ENCODE measurements at regions of chr3 and their contacts with region 1.

Region 1: GRCh38 chr3:48918388-48919214 is at the start of gene ARIH2:
- DNase-seq: peak; percentile 94
- H3K4me3 Mint-ChIP-seq: peak within 1 kb of the TSS; percentile 98
- H3K27ac Mint-ChIP-seq: peak within 1 kb of the TSS; percentile 100
- H3K4me1 Mint-ChIP-seq: peaks cover 31% of the 10 kb centered on the region
- H3K27me3 Mint-ChIP-seq: no peaks in the 10 kb centered on the region
- total RNA-seq, gene ARIH2: 109 to 130 TPM

Region 2: GRCh38 chr3:48716982-48717746 is 201.4 kb before region 1 on chr3 and contains the start of gene IP6K2:
- CTCF ChIA-PET with region 1: interaction called, 3 read pairs
- POLR2A ChIA-PET with region 1: interaction called, 3 read pairs
- intact Hi-C with region 1: loop called (anchors 2 kb)
- DNase-seq: peak; percentile 100
- H3K4me3 Mint-ChIP-seq: peak within 1 kb of the TSS; percentile 96
- H3K27ac Mint-ChIP-seq: peak within 1 kb of the TSS; percentile 87
- H3K4me1 Mint-ChIP-seq: peaks cover 30% of the 10 kb centered on the region
- H3K27me3 Mint-ChIP-seq: no peaks in the 10 kb centered on the region
- total RNA-seq, gene IP6K2: 41.6 to 43.4 TPM

Region 3: DNA sequence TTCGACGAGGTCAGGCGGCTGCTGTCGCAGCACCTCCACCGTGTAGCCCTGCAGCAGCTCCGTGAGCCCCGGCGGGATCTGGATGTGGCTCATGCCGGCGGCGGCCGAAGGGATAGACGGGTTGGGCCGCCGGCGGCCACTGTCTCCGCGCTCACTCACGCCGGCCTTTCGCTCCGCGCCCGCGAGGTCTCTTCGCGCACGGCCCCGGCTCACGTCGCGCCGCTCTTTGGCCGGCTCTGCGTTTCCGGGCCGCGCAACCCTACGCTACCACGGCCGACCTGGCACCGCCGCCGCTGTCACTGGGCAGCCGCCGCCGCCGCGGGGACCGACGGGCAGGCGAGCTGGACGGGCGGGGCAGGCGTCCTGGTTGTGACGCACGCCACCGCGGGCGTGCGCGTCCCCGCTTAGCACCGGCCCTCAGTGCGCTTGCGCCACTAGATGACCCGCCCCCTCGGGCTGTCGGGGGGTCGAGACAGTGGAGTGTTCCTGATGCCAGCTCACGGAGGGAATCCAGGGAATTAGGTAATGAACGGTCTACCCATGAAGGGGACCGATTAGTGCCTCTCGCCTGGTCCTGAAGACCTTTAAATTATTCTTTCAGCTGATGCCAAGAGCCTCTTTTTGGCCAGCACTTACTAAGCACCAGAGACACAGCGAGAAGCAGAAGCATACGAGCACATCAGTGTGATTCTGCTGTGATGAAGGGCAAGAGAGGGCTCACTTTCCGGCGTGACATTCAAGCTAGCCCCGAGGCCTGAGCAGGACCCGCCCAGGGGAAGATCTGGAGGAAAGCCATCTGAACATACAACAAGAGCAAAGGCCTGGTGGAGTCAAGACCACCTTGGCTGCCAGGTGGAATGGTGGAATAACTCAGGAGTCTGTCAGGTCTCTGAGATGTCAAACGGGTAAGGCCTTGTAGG is 70.8 kb before region 1 on chr3 and contains the start of gene PRKAR2A:
- CTCF ChIA-PET with region 1: interaction called, 8 read pairs
- POLR2A ChIA-PET with region 1: interaction called, 6 read pairs
- intact Hi-C with region 1: loop called (anchors 1 kb)
- DNase-seq: peak; percentile 89
- H3K4me3 Mint-ChIP-seq: peak within 1 kb of the TSS; percentile 83
- H3K27ac Mint-ChIP-seq: peak within 1 kb of the TSS; percentile 89
- H3K4me1 Mint-ChIP-seq: peaks cover 28% of the 10 kb centered on the region
- H3K27me3 Mint-ChIP-seq: no peaks in the 10 kb centered on the region
- total RNA-seq, gene PRKAR2A: 30.4 to 32.7 TPM

Region 4: GRCh38 chr3:48898383-48899234 is 20.0 kb before region 1 on chr3 and contains the start of gene SLC25A20:
- CTCF ChIA-PET with region 1: interaction called, 15 read pairs
- POLR2A ChIA-PET with region 1: interaction called, 28 read pairs
- intact Hi-C with region 1: loop called (anchors 1 kb)
- DNase-seq: peak; percentile 96
- H3K4me3 Mint-ChIP-seq: peak within 1 kb of the TSS; percentile 97
- H3K27ac Mint-ChIP-seq: peak within 1 kb of the TSS; percentile 92
- H3K4me1 Mint-ChIP-seq: peaks cover 35% of the 10 kb centered on the region
- H3K27me3 Mint-ChIP-seq: no peaks in the 10 kb centered on the region
- total RNA-seq, gene SLC25A20: 16.7 to 18.2 TPM

Region 5: DNA sequence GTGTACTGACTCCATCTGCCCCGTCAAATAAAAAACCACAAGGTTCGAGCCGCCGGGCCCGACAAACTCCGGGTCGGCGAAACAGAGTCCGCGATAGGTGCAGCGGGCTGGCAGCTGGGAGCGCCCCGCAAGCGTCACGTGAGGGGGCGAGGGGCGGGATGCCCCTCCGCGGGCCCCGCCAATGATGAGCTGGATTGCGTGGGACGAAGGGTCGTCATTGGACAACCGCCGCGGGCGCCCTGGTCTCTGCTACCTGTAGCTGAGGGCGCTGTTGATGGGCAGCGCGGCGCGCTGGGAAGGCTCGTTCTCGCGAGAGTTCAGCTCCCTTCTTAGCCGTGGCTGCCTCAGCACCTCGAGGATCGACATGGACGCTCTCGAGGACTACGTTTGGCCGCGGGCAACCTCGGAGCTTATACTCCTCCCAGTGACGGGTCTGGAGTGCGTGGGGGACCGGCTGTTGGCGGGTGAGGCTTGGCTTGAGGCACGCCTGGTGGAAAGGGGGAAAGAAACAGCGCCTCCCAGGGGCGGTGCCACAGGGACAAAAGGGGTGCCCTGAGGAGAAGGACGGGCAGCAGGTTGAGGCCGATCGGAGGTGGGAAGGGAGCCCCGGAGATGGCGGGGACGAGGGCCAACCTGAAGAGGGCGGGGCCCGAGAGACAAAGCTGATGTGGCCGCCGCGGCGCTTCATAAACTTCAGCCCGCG is 88.6 kb after region 1 on chr3 and contains the start of gene WDR6:
- CTCF ChIA-PET with region 1: interaction called, 3 read pairs
- POLR2A ChIA-PET with region 1: interaction called, 13 read pairs
- intact Hi-C with region 1: loop called (anchors 5 kb)
- DNase-seq: peak; percentile 99
- H3K4me3 Mint-ChIP-seq: peak within 1 kb of the TSS; percentile 95
- H3K27ac Mint-ChIP-seq: peak within 1 kb of the TSS; percentile 98
- H3K4me1 Mint-ChIP-seq: peaks cover 21% of the 10 kb centered on the region
- H3K27me3 Mint-ChIP-seq: no peaks in the 10 kb centered on the region
- total RNA-seq, gene WDR6: 139 to 144 TPM

Region 6: DNA sequence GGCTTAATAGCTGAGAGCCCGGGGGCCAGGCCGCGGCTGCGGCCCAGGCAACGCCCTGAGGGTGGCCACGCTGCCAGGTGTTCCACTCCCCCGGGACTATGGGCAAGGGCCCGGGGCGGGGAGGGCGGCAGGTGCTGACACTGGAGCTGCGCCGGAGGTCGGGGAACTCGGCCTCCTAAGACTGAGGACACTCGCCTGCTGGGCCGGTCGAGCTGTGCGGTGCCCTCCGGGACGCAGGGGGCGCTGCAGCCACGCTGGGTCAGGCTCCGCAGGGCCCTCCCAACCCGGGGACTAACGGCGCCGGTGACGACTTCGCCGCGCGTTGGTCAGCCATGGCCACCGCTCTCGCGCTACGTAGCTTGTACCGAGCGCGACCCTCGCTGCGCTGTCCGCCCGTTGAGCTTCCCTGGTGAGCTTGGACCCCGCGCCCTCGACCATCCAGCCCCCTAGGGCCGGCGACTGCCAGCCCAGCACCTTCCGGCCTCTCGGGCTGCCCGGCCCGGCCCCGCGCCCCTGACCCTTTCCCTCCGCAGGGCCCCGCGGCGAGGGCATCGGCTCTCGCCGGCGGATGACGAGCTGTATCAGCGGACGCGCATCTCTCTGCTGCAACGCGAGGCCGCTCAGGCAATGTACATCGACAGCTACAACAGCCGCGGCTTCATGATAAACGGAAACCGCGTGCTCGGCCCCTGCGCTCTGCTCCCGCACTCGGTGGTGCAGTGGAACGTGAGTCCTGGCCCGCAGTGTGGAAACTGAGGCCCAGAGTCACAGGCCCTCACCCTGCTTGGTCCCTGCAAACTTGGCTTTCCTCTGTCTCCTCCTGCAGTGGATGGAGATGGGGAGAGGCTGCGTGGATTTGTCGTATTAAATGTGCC is 103.4 kb after region 1 on chr3 and contains the start of gene NDUFAF3:
- CTCF ChIA-PET with region 1: interaction called, 7 read pairs
- POLR2A ChIA-PET with region 1: interaction called, 22 read pairs
- intact Hi-C with region 1: no loop called
- DNase-seq: peak; percentile 96
- H3K4me3 Mint-ChIP-seq: peak within 1 kb of the TSS; percentile 97
- H3K27ac Mint-ChIP-seq: peak within 1 kb of the TSS; percentile 98
- H3K4me1 Mint-ChIP-seq: peaks cover 56% of the 10 kb centered on the region
- H3K27me3 Mint-ChIP-seq: no peaks in the 10 kb centered on the region
- total RNA-seq, gene NDUFAF3: 101 to 106 TPM

Region 7: DNA sequence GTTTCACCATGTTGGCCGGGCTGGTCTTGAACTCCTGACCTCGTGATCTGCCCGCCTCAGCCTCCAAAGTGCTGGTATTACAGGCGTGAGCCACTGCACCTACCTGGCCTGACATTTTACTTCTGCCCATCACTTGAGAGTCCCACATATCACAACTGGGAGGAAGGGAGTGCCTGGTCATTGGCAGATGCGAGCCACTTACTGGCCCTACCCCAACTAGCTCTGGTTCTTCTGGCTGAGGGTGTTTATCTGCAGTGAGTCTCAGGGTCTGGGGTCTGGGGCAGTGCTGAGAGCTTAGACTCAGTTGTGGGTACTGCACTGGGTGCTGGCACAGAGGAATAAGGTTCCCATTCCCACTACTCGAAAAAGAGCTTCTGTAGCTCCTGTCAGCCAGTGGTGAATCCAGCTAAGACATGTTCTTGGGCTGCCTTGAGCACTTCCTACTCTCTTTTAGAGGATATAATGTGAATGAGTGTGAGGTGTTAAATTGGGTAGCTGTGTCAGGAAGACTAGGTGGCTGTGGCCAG is 581.7 kb after region 1 on chr3:
- CTCF ChIA-PET with region 1: no interaction called
- POLR2A ChIA-PET with region 1: no interaction called
- intact Hi-C with region 1: no loop called
- DNase-seq: no peak
- H3K4me3 Mint-ChIP-seq: no peak overlapping the region
- H3K27ac Mint-ChIP-seq: no peak overlapping the region
- H3K4me1 Mint-ChIP-seq: peaks cover 5% of the 10 kb centered on the region
- H3K27me3 Mint-ChIP-seq: no peaks in the 10 kb centered on the region

Measured in activated CD4-positive, alpha-beta memory T cell treated with anti-CD3 and anti-CD28 coated beads for 36 hours (primary cell).